PC-3 (cell line): ENCODE measurements at regions of chr17 and their contacts with region 1.

Region 1: GRCh38 chr17:57954395-57955182 is 623 bp downstream of the CUEDC1 start:
- DNase-seq: peak; percentile 76
- ATAC-seq: peak; percentile 70
- H3K4me3 ChIP-seq: peak overlapping the region; percentile 80
- H3K27ac ChIP-seq: peak overlapping the region; percentile 73
- H3K4me1 ChIP-seq: peaks cover 54% of the 10 kb centered on the region
- H3K27me3 ChIP-seq: no peaks in the 10 kb centered on the region
- CTCF ChIP-seq: no peak

Region 2: DNA sequence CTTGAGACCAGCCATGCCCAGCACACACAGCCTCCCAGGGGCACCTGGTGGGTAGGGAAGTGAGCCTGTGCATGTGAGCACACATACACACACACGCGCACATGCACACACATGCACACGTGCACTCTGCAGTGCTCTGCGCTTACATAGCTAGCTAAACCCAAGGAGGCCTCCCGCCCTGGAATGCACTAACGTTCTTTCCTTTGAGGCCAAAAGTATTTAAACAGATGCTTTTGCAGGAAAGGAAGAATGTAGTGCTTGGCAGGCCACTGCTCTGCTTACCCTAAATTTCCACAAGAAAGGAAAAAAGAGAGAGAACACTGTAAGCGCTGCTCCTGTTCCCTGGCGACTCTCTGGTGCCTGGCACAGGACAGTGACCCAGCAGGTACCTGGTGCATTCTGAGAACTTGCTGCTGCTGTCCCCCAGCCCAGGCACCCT is 73.5 kb before region 1 on chr17:
- CTCF ChIA-PET with region 1: no interaction called
- POLR2A ChIA-PET with region 1: no interaction called
- intact Hi-C with region 1: no loop called
- DNase-seq: no peak
- ATAC-seq: no peak
- H3K4me3 ChIP-seq: no peak overlapping the region
- H3K27ac ChIP-seq: peak overlapping the region; percentile 94
- H3K4me1 ChIP-seq: peaks cover 50% of the 10 kb centered on the region
- H3K27me3 ChIP-seq: no peaks in the 10 kb centered on the region
- CTCF ChIP-seq: no peak

Region 3: DNA sequence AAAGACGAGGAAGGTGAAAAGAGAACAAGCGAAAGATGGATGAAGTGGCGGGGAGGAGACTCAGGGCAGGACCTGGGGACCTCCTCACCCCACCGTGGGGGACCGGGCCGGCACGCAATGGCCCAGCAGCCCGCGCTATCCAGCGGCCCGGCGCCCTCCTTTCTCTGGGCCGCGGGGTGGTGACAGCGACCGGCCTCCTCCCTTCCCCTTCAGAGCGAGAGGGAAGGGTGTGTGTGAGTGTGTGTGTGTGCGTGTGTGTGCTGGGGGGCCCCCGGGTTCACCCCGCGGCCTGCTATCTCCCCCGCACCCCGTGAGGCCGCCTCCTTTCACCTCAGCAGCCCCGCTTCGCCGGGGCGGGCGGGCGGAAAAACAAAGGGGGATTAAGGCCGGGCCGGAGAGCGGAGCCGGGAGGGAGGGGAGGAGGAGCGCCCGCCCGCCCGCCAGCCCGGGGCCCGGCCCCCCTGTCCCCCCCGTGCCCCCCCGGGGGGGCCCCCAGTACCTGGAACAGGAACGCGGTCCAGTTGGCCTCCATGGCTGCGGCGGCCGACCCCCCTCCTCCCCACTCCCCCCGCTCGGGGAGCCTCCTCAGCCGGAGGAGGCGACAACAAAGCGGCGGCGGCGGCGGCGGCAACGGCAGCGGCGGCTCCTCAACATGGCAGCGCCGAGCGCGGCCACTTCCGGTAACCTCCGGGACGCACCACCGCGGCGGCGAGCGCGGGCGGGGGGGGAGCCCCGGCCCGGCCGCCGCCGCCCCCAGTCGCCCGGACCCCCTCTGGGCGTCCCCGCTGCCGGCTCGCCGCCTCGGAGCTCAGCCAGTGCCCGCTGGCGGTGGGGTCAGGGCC is 33.2 kb after region 1 on chr17 and contains the start of gene VEZF1:
- CTCF ChIA-PET with region 1: interaction called, 25 read pairs
- POLR2A ChIA-PET with region 1: interaction called, 12 read pairs
- intact Hi-C with region 1: loop called (anchors 2 kb)
- DNase-seq: peak; percentile 79
- ATAC-seq: peak; percentile 42
- H3K4me3 ChIP-seq: peak within 1 kb of the TSS; percentile 80
- H3K27ac ChIP-seq: peak within 1 kb of the TSS; percentile 87
- H3K4me1 ChIP-seq: peaks cover 39% of the 10 kb centered on the region
- H3K27me3 ChIP-seq: no peaks in the 10 kb centered on the region
- CTCF ChIP-seq: no peak
- total RNA-seq, gene VEZF1: 70.1 and 78.1 TPM in 2 replicates

Region 4: DNA sequence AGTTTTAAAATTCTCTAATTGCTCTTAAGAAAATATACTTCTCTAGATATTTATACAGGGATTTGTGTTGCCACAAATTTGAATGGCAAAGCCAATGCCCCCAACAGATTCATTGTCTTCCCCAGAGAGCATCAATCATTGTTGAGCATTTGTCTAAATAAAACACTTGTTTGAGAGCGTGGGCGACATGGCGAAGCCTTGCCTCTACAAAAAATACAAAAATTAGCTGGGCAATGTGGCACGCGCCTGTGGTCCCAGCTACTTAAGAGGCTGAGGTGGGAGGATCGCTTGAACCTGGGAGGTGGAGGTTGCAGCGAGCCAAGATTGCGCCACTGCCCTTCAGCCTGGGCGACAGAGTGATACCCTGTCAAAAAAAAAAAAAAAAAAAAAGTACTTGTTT is 65.8 kb after region 1 on chr17:
- CTCF ChIA-PET with region 1: no interaction called
- POLR2A ChIA-PET with region 1: no interaction called
- intact Hi-C with region 1: no loop called
- DNase-seq: no peak
- ATAC-seq: no peak
- H3K4me3 ChIP-seq: no peak overlapping the region
- H3K27ac ChIP-seq: no peak overlapping the region
- H3K4me1 ChIP-seq: peaks cover 13% of the 10 kb centered on the region
- H3K27me3 ChIP-seq: no peaks in the 10 kb centered on the region
- CTCF ChIP-seq: no peak